ENCODE measurements at regions of chr2 and their contacts with region 1.

Region 1: GRCh38 chr2:104340162-104340561 is 513.8 kb upstream of the POU3F3 start:
- DNase-seq: no peak
- ATAC-seq: no peak
- H3K4me3 ChIP-seq: no peak overlapping the region
- H3K27ac ChIP-seq: no peak overlapping the region
- H3K4me1 ChIP-seq: no peaks in the 10 kb centered on the region
- H3K27me3 ChIP-seq: no peaks in the 10 kb centered on the region
- CTCF ChIP-seq: no peak
- EP300 ChIP-seq: no peak
- POLR2A ChIP-seq: no peak
- RAD21 ChIP-seq: no peak

Region 2: GRCh38 chr2:104368089-104368488 is 27.9 kb after region 1 on chr2:
- CTCF ChIA-PET with region 1: no interaction called
- POLR2A ChIA-PET with region 1: no interaction called
- RAD21 ChIA-PET with region 1: no interaction called
- SMC1A ChIA-PET with region 1: no interaction called
- in situ Hi-C with region 1: no loop called
- intact Hi-C with region 1: loop called (anchors 1 kb)
- DNase-seq: no peak
- ATAC-seq: no peak
- H3K4me3 ChIP-seq: no peak overlapping the region
- H3K27ac ChIP-seq: no peak overlapping the region
- H3K4me1 ChIP-seq: no peaks in the 10 kb centered on the region
- H3K27me3 ChIP-seq: no peaks in the 10 kb centered on the region
- CTCF ChIP-seq: no peak
- EP300 ChIP-seq: no peak
- POLR2A ChIP-seq: no peak
- RAD21 ChIP-seq: no peak